ENCODE measurements at regions of chr10 and their contacts with region 1.

Region 1: GRCh38 chr10:3043512-3044368 is 23.6 kb upstream of the PFKP start:
- DNase-seq: peak; percentile 82

Region 2: GRCh38 chr10:2927958-2928840 is 115.5 kb before region 1 on chr10:
- in situ Hi-C with region 1: loop called (anchors 25 kb)
- DNase-seq: peak; percentile 68